Vagina (tissue), 2 donors: ENCODE measurements at regions of chr2 and their contacts with region 1.

Region 1: DNA sequence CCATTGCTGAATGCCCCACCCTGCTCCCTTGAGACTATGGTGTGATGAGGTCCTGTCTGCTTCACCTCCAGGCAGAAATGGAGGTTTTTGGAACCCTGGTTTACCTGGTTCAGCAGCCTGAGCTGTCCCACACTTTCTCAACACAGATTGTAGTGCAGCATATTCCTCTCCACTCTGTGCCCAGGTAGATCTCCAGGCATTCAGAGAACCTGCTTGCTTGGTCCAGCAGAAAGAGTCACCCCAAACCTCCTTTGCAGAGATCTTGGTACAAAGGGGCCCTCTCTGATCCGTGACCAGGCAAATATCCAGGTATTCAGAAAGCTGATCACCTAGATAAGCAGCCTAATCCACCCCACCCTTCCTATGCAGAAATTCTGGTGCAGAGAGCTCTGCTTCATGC is 1288.2 kb upstream of the CRIM1 start:
- DNase-seq: no peak
- H3K4me3 ChIP-seq: no peak overlapping the region
- H3K27ac ChIP-seq: no peak overlapping the region
- H3K4me1 ChIP-seq: no peaks in the 10 kb centered on the region
- H3K27me3 ChIP-seq: no peaks in the 10 kb centered on the region
- CTCF ChIP-seq: no peak
- POLR2A ChIP-seq: no peak

Region 2: DNA sequence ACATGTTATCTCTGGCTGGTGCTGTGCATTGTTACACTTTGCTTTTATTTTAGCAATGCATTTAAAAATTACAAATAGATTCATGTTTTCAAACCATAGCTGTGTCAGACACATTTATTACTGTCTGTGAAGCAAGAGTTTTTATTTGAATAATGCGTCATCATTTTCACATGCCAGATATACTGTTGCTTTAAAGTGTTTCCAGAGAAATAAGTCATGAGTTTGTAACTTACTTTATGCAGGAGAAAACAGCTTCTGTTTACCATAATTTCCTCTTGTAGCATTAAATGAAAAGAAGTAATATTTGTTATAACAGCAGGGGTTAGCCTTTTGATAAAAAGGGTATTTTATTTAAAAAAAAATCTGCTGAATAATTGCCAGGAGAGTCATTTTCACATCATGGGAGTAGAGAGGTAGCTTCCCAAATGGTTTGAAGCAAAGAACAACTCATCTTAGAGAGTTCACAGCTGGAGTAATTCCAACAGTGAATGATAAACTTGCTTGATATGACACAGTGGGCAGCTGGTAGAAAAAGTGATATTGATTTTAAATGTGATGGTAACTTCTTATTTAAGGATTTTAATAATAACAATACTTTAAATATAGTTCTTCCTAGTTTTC is 13.7 kb after region 1 on chr2:
- intact Hi-C with region 1: loop called (anchors 1 kb)
- DNase-seq: no peak
- H3K4me3 ChIP-seq: no peak overlapping the region
- H3K27ac ChIP-seq: no peak overlapping the region
- H3K4me1 ChIP-seq: peaks cover 8% of the 10 kb centered on the region
- H3K27me3 ChIP-seq: no peaks in the 10 kb centered on the region
- CTCF ChIP-seq: no peak
- POLR2A ChIP-seq: no peak